ENCODE measurements at regions of chr12 and their contacts with region 1.

Region 1: DNA sequence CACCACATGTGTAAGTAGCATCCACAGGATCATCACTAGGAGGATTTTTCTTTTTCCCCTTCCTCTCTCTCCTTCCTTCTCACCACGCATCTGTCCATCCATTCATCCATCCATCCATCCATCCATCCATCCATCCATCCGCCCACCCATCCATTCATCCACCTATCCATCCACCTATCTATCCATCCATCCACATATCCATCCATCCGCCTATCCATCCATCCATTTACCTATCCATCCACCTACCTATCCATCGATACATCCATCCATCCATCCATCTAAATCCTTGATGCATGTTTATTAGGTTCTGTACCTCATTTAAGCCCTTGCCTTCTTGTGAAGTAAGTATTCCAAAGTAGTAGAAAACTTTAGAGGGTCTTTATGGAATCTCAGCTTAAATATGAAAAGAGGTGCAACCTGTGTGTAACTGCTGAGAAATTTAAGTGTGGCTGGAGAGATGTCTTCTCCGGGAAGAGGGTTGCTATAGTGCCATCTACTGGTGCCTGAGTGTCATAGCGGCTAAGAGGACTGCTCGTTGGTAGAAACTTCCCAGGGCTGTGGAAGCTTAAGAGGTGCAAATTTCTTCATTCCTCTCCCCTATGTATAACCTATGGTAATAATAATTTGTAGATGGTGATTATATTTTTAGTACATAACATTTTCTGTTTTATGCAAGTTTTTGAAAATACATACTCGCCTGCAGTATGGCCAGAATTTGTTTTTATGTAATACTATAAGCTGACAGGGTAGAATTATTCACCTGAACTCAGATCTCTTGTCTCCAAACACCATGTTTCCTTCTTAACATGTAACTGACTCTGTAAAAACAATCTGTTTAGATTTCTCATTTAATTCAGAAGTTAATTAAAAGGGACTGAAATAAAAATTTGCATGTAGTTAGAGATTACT is 46.0 kb downstream of the MYO1H start:
- DNase-seq: peak; percentile 61
- ATAC-seq: peak; percentile 72
- H3K4me3 Mint-ChIP-seq: no peak overlapping the region
- H3K27ac Mint-ChIP-seq: no peak overlapping the region
- H3K4me1 Mint-ChIP-seq: no peaks in the 10 kb centered on the region
- H3K27me3 Mint-ChIP-seq: peaks cover 17% of the 10 kb centered on the region

Region 2: DNA sequence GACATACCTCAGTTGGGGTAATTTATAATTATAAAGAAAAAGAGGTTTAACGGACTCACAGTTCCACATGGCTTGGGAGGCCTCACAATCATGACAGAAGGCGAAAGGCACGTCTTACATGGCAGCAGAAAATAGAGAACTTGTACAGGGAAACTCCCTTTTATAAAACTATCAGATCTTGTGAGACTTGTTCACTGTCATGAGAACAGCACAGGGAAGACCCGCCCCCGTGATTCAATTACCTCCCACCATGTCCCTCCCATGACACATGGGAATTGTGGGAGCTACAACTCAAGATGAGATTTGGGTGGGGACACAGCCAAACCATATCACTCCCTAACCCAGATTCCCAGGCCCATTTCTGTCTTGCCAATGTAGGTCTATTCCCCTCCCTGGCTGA is 23.9 kb before region 1 on chr12:
- CTCF ChIA-PET with region 1: interaction called, 10 read pairs
- POLR2A ChIA-PET with region 1: no interaction called
- DNase-seq: no peak
- ATAC-seq: no peak
- H3K4me3 Mint-ChIP-seq: no peak overlapping the region
- H3K27ac Mint-ChIP-seq: no peak overlapping the region
- H3K4me1 Mint-ChIP-seq: no peaks in the 10 kb centered on the region
- H3K27me3 Mint-ChIP-seq: peaks cover 21% of the 10 kb centered on the region

Region 3: DNA sequence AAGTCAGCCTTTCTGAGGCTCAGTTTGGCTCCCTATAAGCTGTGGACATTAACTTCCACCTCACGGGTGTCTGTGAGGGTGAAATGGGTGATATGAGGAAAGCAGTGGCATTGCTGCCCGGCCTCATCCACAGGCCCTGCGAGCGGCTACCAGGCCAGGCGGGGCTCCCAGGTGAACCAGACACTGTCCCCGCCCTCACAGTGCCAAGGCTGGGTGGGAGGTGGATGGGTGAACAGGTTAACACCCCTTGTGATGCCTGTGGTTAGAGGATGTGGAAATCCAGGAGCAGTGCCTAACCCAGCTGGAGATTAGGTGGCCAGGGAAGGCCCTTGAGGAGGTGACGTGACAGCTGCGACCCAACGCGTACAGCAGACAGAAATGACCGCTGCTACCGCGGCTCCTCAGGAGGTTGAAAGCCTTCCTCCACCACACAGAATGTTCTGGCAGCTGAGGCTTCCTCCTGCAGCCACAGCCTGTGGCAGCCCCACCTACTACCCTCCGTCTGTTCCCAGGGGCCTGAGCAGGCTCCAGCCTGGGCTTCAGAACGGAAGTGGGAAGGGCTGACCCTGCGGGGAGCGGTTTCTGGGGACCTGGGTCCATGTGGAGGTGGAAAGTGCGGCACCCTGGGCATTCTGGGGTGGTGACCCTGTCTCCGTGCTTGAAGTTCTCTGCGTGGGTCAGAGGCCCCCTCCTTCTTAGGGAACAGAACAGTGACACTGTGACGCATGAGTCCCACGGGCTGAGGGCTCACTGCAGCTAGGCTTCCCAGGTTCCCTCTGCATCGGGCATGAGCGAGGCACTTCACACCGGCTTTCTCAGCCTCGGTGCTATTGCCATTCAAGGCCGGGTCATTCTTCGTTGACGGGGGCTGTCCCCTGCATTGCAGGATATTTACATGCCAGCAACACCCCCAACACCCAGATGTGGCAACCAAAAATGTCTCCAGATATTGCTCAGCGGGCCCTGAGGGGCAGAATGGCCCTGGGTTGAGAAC is 169.9 kb after region 1 on chr12:
- CTCF ChIA-PET with region 1: no interaction called
- POLR2A ChIA-PET with region 1: no interaction called
- DNase-seq: no peak
- ATAC-seq: no peak
- H3K4me3 Mint-ChIP-seq: no peak overlapping the region
- H3K27ac Mint-ChIP-seq: no peak overlapping the region
- H3K4me1 Mint-ChIP-seq: no peaks in the 10 kb centered on the region
- H3K27me3 Mint-ChIP-seq: no peaks in the 10 kb centered on the region